ENCODE measurements at regions of chr17 and their contacts with region 1.

Region 1: DNA sequence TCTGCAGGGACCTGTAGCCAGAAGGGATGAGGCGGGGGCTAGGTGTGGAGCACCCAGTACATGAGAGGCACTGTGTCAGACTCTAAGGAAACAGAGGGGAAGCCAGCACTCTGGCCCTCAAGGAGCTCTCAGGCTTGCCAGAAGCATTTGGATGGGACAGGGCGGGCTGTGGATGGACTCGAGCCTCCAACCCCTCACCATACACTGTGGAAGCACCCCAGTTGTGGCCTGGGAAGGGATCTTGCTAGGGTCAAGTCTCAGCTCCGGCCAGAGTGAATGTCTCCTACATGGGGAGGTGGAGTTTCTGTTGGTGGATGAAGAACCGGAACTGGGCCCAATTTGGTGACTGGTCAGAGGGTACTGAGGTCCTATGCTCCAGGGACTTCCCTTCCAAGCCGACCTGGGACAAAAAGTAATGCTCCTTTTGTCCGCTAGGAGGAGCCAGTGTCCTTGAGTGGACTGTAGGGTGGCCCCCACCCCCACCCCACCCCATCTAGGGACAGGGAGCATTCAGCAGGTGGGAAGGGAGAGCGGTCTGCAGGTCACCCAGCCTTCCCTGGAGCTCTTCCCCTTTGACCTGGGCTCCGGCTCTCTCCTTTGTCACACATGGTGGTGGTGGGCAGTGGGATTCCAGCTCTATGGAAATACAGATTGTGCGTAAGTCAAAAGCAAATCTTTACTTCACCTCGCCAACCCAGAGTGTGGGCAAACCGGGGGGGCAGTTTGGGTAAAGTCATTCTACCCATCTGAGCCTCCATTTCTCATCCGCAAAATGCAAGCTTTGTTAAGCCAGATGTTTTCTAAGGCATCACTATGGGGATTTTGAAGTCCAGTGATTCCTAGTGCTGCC is 20.4 kb upstream of the PHB1 start:
- DNase-seq: no peak
- H3K4me3 ChIP-seq: no peak overlapping the region
- H3K27ac ChIP-seq: no peak overlapping the region
- H3K4me1 ChIP-seq: peaks cover 0 to 5% (median 0%) of the 10 kb centered on the region in 4 donors
- H3K27me3 ChIP-seq: peaks cover 8 to 19% (median 19%) of the 10 kb centered on the region in 3 donors
- CTCF ChIP-seq: peak in 3 of 4 experiments; percentile 47 to 73 (median 61)
- EP300 ChIP-seq: no peak
- POLR2A ChIP-seq: no peak

Region 2: DNA sequence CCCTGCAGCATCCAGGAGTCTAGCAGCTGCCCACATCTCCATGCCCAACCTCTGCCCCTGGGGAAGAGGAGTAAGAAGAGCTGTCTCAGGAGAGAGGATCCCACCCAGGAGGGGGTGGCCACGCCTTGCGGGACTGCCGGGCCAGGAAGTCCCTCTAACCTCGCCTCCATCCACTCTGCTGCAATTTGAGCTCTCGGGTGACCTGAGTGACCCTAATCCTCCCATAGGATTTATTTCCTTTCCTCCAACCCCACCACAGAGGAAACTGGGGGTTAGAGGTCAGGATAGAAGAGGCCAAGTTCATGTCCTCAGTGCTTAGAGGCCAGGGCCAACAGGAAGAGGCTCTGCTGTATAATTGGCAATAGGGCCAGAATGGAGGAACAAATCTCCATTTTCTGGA is 37.5 kb after region 1 on chr17:
- intact Hi-C with region 1: no loop called
- DNase-seq: no peak
- H3K4me3 ChIP-seq: no peak overlapping the region
- H3K27ac ChIP-seq: no peak overlapping the region
- H3K4me1 ChIP-seq: peaks cover 0 to 18% (median 12%) of the 10 kb centered on the region in 4 donors
- H3K27me3 ChIP-seq: peaks cover 8 to 67% (median 13%) of the 10 kb centered on the region in 3 donors
- CTCF ChIP-seq: no peak
- EP300 ChIP-seq: no peak
- POLR2A ChIP-seq: no peak

Region 3: DNA sequence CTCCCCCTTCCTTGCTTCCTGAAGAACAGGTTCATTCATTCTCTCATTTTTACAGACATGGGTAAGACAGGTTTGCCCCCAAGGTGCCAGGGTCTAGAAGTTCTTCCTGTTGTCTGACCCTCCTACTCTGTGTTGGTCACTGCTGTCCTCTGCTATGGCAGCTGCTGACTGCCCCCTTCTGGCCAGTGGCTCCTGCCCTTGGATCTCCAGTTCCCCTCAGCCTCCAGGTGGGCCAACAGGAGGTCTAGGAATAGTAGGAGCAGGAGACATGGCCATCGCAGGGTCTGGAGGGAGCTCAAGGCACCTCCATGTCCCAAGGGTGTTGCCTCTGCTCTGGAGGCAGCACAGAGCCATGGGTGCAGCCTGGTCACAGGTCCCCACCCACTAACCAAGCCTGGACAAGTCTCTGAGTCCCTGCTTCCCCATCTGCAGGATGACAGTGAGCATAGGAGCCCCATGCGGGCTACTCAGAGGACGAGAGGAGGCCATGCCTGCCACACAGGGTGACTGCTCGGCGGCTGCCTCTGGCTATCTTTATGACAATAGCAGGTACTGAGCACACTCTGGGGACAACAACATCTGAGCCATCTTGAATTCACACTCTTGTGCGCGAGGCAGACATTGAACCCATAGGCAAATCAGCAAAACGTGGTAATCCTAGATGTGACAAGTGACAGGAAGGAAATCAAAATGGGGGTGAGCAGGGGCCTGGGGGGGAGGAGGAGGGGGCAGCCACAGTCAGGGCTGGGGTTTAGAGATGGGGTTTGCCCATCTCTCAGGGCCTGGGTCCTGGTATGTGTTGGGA is 113.7 kb after region 1 on chr17:
- intact Hi-C with region 1: loop called (anchors 2 kb)
- DNase-seq: no peak
- H3K4me3 ChIP-seq: no peak overlapping the region
- H3K27ac ChIP-seq: no peak overlapping the region
- H3K4me1 ChIP-seq: peaks cover 0 to 6% (median 0%) of the 10 kb centered on the region in 4 donors
- H3K27me3 ChIP-seq: no peaks in the 10 kb centered on the region
- CTCF ChIP-seq: peak in 3 of 4 experiments; percentile 16 to 56 (median 55)
- EP300 ChIP-seq: no peak
- POLR2A ChIP-seq: no peak

Measured in sigmoid colon (tissue), 7 donors.